GM12878 (cell line): ENCODE measurements at regions of chr2 and their contacts with region 1.

Region 1: DNA sequence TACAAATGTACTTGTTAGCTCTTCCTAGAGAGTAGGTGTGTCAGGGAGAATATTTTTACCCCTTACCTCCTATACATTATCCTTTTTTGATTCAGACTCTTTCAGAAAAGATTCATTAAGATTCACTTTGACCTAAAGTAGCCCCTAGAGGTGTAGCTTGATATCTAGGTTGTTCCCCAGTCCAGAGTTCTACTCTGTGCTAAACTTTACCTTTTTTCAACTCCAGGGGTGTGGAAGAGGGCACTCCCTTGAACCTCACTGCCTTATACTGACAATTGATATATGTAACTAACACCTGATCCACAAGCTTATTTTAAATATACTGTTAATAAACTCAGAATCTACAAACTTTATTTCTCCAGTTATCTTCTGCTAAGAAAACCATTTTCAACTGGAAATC is 30.0 kb downstream of the AFTPH start:
- DNase-seq: no peak
- ATAC-seq: peak; percentile 61
- H3K4me3 ChIP-seq: no peak overlapping the region
- H3K27ac ChIP-seq: no peak overlapping the region
- H3K4me1 ChIP-seq: peaks cover 5% of the 10 kb centered on the region
- H3K27me3 ChIP-seq: no peaks in the 10 kb centered on the region
- CTCF ChIP-seq: no peak
- EP300 ChIP-seq: no peak
- POLR2A ChIP-seq: no peak
- RAD21 ChIP-seq: no peak

Region 2: DNA sequence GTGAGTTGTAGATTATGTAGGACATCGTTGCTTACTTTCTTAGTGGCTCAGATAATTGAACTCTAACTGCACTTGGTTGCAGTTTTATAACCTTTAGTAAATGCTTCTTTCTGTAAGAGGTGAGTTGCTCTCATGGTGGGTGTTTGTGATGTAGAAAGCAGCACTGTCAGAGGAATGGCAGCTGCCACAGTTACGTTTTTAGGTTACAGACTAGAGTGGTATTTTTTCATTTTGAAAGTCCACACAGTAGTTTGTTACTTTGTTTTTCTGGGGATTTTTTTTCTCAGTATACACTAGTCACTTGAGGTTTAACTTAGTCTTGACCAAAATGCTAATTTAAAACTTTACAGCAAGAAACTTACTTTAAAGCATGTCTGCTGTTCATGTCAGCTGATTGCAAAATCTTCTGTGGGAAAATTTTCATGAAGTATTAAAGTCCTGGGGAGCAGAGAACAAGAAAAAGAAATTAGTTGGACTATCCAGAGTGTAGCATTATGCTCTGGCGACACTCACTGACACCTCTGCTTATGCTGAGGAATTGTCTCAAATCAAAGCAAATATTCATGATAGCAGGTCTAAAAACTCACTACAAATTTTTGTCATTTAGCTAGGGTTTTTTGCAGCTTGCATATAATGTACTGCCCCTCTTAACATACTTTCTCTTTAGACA is 15.2 kb before region 1 on chr2:
- CTCF ChIA-PET with region 1: interaction called, 10 read pairs
- POLR2A ChIA-PET with region 1: interaction called, 5 read pairs
- RAD21 ChIA-PET with region 1: interaction called, 7 read pairs
- SMC1A ChIA-PET with region 1: interaction called, 41 read pairs
- in situ Hi-C with region 1: no loop called
- intact Hi-C with region 1: loop called (anchors 2 kb)
- DNase-seq: peak; percentile 49
- ATAC-seq: peak; percentile 57
- H3K4me3 ChIP-seq: peak overlapping the region; percentile 14; the same call in 1 of the 2 replicates
- H3K27ac ChIP-seq: peak overlapping the region; percentile 71
- H3K4me1 ChIP-seq: peaks cover 48% of the 10 kb centered on the region; the same call in 1 of the 2 replicates
- H3K27me3 ChIP-seq: no peaks in the 10 kb centered on the region
- CTCF ChIP-seq: no peak
- EP300 ChIP-seq: no peak
- POLR2A ChIP-seq: no peak
- RAD21 ChIP-seq: no peak

Region 3: GRCh38 chr2:64626963-64627760 is 73.0 kb after region 1 on chr2:
- CTCF ChIA-PET with region 1: no interaction called
- POLR2A ChIA-PET with region 1: no interaction called
- RAD21 ChIA-PET with region 1: no interaction called
- SMC1A ChIA-PET with region 1: no interaction called
- in situ Hi-C with region 1: no loop called
- intact Hi-C with region 1: no loop called
- DNase-seq: no peak
- ATAC-seq: no peak
- H3K4me3 ChIP-seq: no peak overlapping the region
- H3K27ac ChIP-seq: no peak overlapping the region
- H3K4me1 ChIP-seq: peaks cover 8% of the 10 kb centered on the region
- H3K27me3 ChIP-seq: no peaks in the 10 kb centered on the region
- CTCF ChIP-seq: no peak
- EP300 ChIP-seq: no peak
- POLR2A ChIP-seq: no peak
- RAD21 ChIP-seq: no peak

Region 4: GRCh38 chr2:64666810-64667438 is 112.8 kb after region 1 on chr2:
- CTCF ChIA-PET with region 1: no interaction called
- POLR2A ChIA-PET with region 1: no interaction called
- RAD21 ChIA-PET with region 1: no interaction called
- SMC1A ChIA-PET with region 1: no interaction called
- in situ Hi-C with region 1: no loop called
- intact Hi-C with region 1: no loop called
- DNase-seq: no peak
- ATAC-seq: peak; percentile 81
- H3K4me3 ChIP-seq: peak overlapping the region; percentile 33
- H3K27ac ChIP-seq: peak overlapping the region; percentile 71
- H3K4me1 ChIP-seq: peaks cover 15% of the 10 kb centered on the region
- H3K27me3 ChIP-seq: no peaks in the 10 kb centered on the region
- CTCF ChIP-seq: no peak
- EP300 ChIP-seq: no peak; a peak in 1 of 4 replicates
- POLR2A ChIP-seq: no peak
- RAD21 ChIP-seq: peak; percentile 4; the same call in 1 of the 2 replicates